ENCODE measurements at regions of chr2 and their contacts with region 1.

Region 1: DNA sequence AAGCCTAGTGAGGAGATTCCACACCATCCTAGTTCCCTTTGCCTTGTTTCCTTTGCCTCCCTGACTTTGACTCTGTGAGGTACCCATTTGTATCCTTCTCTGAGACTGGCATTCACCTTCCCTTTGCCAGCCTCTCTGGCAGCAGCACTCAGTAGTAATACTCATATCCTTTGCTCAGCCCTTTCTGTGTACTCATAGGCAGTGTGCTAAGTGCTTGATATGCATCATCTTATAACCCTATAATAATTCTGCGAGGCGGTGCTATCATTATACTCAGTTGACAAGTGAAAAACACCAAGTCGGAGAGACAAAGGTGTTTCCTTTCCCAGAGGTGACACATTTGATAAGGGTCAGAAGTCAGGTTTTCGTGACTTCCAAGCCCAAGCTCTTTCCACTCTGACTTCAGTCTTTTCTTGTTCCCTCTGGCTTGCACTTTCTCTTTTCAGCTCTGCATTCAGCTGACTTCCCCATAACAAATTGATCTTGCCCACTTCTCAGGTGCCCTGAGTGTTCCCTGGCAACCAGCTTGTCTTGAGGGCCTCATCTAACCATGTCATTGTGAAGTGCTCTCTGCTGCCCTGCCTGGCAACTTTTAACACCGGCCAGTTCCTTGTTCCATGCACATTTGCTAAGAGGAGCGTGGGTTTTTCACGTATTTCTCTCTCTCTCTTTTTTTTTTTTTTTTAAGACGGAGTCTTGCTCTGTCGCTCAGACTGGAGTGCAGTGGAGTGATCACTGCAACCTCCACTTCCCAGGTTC is 94.5 kb upstream of the UPP2 start:
- DNase-seq: no peak
- ATAC-seq: no peak
- H3K4me3 ChIP-seq: no peak overlapping the region
- H3K27ac ChIP-seq: no peak overlapping the region
- H3K4me1 ChIP-seq: peaks cover 4 to 6% of the 10 kb centered on the region in 2 donors
- H3K27me3 ChIP-seq: no peaks in the 10 kb centered on the region
- CTCF ChIP-seq: no peak
- POLR2A ChIP-seq: no peak

Region 2: GRCh38 chr2:157492189-157492773 is 514.9 kb before region 1 on chr2:
- in situ Hi-C with region 1: loop called in 2 of 4 experiments (anchors 5 to 10 kb)
- intact Hi-C with region 1: loop called (anchors 1 kb)
- DNase-seq: peak; percentile 10 to 28
- ATAC-seq: peak in 1 of 2 donors; percentile 56
- H3K4me3 ChIP-seq: no peak overlapping the region
- H3K27ac ChIP-seq: no peak overlapping the region
- H3K4me1 ChIP-seq: no peaks in the 10 kb centered on the region
- H3K27me3 ChIP-seq: no peaks in the 10 kb centered on the region
- CTCF ChIP-seq: peak in 4 of 5 experiments; percentile 32 to 65 (median 58)
- POLR2A ChIP-seq: no peak

Region 3: DNA sequence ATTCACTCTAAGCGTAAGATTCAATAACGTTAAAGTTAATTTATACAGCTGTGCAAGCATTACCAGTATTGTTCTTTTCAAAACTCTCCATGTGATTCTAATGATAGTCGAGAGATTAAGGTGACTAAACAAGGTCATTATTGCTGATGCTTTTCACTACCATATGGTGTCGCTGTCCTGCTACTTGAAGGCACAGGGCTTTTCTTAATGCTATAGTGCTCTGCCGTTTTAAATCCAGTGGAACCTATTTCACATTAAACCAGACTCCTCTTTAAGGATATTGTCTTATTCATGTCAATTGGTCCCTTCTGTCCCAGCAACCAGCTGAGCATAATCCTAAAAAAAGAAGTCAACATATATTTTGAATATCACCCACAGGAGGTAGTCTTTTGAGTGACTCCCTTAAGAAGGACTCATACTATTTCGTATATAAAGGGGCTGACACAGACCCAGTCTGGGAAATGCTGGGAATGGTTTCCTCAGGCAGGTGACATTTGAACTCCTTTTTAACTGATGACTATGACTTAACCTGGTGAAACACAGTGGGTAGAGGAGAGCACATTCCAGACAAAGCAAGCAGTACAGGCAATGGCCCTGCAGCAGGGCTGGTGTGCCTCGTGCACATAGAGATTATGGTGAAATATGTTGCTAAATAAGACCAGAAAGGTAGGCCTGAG is 509.4 kb before region 1 on chr2:
- in situ Hi-C with region 1: loop called (anchors 5 to 10 kb)
- intact Hi-C with region 1: loop called (anchors 1 kb)
- DNase-seq: no peak
- ATAC-seq: peak in 1 of 2 donors; percentile 73
- H3K4me3 ChIP-seq: no peak overlapping the region
- H3K27ac ChIP-seq: no peak overlapping the region
- H3K4me1 ChIP-seq: no peaks in the 10 kb centered on the region
- H3K27me3 ChIP-seq: no peaks in the 10 kb centered on the region
- CTCF ChIP-seq: peak; percentile 17 to 58 (median 44)
- POLR2A ChIP-seq: no peak

Region 4: DNA sequence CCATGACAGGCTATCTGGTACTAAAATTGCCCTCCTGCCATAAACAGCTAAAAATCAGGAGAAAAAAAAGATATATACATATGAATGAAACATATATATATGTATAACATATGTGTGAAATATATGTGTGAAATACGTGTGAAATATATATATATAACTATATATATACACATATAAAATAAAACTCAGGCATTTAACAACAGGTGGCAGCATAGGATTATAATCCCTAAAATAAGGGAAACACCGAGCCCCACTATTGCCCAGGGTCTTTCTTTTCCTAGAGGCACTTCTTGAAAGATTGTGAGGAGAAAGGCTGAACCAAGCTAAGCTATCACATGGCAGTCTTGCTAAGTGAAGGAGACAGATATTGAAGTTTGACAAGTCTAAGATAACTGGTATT is 497.4 kb before region 1 on chr2:
- in situ Hi-C with region 1: loop called in 2 of 4 experiments (anchors 10 kb)
- intact Hi-C with region 1: no loop called
- DNase-seq: no peak
- ATAC-seq: no peak
- H3K4me3 ChIP-seq: no peak overlapping the region
- H3K27ac ChIP-seq: no peak overlapping the region
- H3K4me1 ChIP-seq: no peaks in the 10 kb centered on the region
- H3K27me3 ChIP-seq: peaks cover 0 to 3% (median 0%) of the 10 kb centered on the region in 3 donors
- CTCF ChIP-seq: peak in 1 of 5 experiments; percentile 13
- POLR2A ChIP-seq: no peak

Region 5: DNA sequence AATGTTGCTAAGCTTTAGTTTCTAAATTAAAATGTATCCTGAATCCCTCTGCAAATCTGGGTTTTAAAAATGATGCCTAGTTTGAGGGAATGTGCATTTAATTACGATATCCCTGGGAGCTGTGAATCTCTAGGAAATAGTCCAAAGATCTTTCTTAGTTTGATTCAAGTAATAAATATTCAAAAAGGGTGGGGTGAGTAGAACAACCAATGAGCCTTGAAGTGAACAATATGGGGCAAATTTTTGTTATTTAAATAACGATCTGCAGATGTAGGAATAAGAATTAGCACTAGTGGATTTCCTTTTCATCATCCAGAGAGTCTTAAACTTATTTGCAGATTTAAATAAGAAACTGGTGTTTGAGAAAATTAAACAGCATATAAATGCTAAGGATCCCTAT is 237.3 kb before region 1 on chr2:
- in situ Hi-C with region 1: loop called in 3 of 4 experiments (anchors 5 to 10 kb)
- intact Hi-C with region 1: no loop called
- DNase-seq: no peak
- ATAC-seq: no peak
- H3K4me3 ChIP-seq: no peak overlapping the region
- H3K27ac ChIP-seq: no peak overlapping the region
- H3K4me1 ChIP-seq: no peaks in the 10 kb centered on the region
- H3K27me3 ChIP-seq: no peaks in the 10 kb centered on the region
- CTCF ChIP-seq: no peak
- POLR2A ChIP-seq: no peak

Region 6: GRCh38 chr2:157777427-157777826 is 229.7 kb before region 1 on chr2:
- in situ Hi-C with region 1: loop called in 3 of 4 experiments (anchors 5 to 10 kb)
- intact Hi-C with region 1: loop called (anchors 1 kb)
- DNase-seq: no peak
- ATAC-seq: no peak
- H3K4me3 ChIP-seq: no peak overlapping the region
- H3K27ac ChIP-seq: no peak overlapping the region
- H3K4me1 ChIP-seq: peaks cover 23 to 24% of the 10 kb centered on the region in 2 donors
- H3K27me3 ChIP-seq: no peaks in the 10 kb centered on the region
- CTCF ChIP-seq: peak; percentile 56 to 77 (median 72)
- POLR2A ChIP-seq: no peak

Region 7: GRCh38 chr2:158120664-158121641 is 113.8 kb after region 1 on chr2:
- in situ Hi-C with region 1: no loop called
- intact Hi-C with region 1: no loop called
- DNase-seq: no peak
- ATAC-seq: no peak
- H3K4me3 ChIP-seq: no peak overlapping the region
- H3K27ac ChIP-seq: no peak overlapping the region
- H3K4me1 ChIP-seq: no peaks in the 10 kb centered on the region
- H3K27me3 ChIP-seq: no peaks in the 10 kb centered on the region
- CTCF ChIP-seq: no peak
- POLR2A ChIP-seq: no peak

Measured in gastrocnemius medialis (tissue), 4 donors.